ENCODE measurements at regions of chr21 and their contacts with region 1.

Region 1: DNA sequence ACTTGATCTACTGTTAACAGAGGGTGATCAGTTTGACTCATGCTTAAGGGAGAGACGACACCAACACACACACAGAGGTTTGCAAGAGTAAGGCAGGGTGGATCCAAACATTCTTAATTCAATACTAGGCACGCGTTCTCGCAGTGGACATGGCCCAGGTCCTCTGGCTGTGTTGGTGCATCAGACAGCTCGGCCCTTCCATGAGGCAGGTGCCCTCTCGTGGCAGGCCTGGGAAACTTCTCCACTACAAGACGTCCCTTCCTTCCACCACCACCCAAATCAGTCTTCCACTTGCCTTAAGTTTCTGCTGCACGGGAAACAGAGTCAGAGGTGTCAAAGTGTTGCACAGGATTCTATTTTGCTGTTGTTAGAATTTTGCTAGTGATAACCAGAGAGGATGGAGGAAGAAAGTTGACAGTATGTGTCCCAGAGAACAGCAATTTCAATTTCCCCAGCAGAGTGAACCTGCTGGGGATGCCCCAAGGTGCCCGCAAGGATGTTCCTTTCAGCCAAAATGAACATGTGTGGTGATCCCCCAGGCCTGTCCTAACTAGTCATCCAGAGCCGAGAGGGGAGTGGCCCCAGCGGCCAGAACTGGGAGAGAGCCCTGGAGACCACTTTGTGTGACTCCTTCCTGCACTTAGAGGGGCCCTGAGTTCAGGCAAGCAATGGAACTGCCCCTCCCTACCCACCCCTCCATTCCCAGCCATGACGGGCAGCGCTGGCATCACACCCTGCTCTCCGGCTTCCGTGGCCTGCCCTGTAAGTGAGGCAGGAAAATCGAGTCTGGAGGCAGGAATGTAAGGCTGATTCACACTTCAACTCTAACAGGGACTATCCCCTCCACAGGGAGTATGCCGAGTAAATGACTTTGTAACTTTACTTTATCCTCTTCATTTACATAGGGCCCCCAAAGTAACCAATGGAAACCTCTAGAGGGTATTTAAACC is 34.8 kb downstream of the MX1 start:
- DNase-seq: peak; percentile 38 to 55 (median 39)
- H3K4me3 ChIP-seq: no peak overlapping the region
- H3K4me3 Mint-ChIP-seq: no peak overlapping the region
- H3K27ac ChIP-seq: no peak overlapping the region
- H3K27ac Mint-ChIP-seq: peak overlapping the region in 2 of 7 donors; percentile 19
- H3K4me1 ChIP-seq: no peaks in the 10 kb centered on the region
- H3K4me1 Mint-ChIP-seq: peaks cover 2% of the 10 kb centered on the region
- H3K27me3 ChIP-seq: no peaks in the 10 kb centered on the region
- H3K27me3 Mint-ChIP-seq: peaks cover 2 to 4% (median 2%) of the 10 kb centered on the region in 3 donors
- CTCF ChIP-seq: peak; percentile 83

Region 2: GRCh38 chr21:41283211-41283818 is 177.5 kb before region 1 on chr21:
- intact Hi-C with region 1: loop called (anchors 1 to 2 kb)
- DNase-seq: peak; percentile 65 to 77 (median 73)
- H3K4me3 ChIP-seq: no peak overlapping the region
- H3K4me3 Mint-ChIP-seq: no peak overlapping the region
- H3K27ac ChIP-seq: no peak overlapping the region
- H3K27ac Mint-ChIP-seq: no peak overlapping the region
- H3K4me1 ChIP-seq: no peaks in the 10 kb centered on the region
- H3K4me1 Mint-ChIP-seq: no peaks in the 10 kb centered on the region
- H3K27me3 ChIP-seq: peaks cover 9 to 10% of the 10 kb centered on the region in 2 donors
- H3K27me3 Mint-ChIP-seq: peaks cover 6 to 9% (median 7%) of the 10 kb centered on the region in 3 donors
- CTCF ChIP-seq: peak; percentile 82

Region 3: GRCh38 chr21:41396506-41397075 is 64.3 kb before region 1 on chr21:
- intact Hi-C with region 1: no loop called
- DNase-seq: peak; percentile 62 to 71 (median 68)
- H3K4me3 ChIP-seq: peak overlapping the region in 1 of 3 experiments; percentile 67
- H3K4me3 Mint-ChIP-seq: peak overlapping the region; percentile 31 to 73
- H3K27ac ChIP-seq: peak overlapping the region; percentile 64 to 84
- H3K27ac Mint-ChIP-seq: peak overlapping the region; percentile 70 to 92 (median 89)
- H3K4me1 ChIP-seq: peaks cover 36 to 44% of the 10 kb centered on the region in 2 donors
- H3K4me1 Mint-ChIP-seq: peaks cover 50% of the 10 kb centered on the region
- H3K27me3 ChIP-seq: no peaks in the 10 kb centered on the region
- H3K27me3 Mint-ChIP-seq: peaks cover 0 to 3% (median 0%) of the 10 kb centered on the region in 3 donors
- CTCF ChIP-seq: no peak

Measured in CD14-positive monocyte (primary cell).